Posterior vena cava (tissue), 2 donors: ENCODE measurements at regions of chr15 and their contacts with region 1.

Region 1: GRCh38 chr15:74127260-74127953 is 3.0 kb upstream of the ISLR2 start:
- DNase-seq: peak; percentile 97

Region 2: GRCh38 chr15:74146277-74146800 is 18.9 kb after region 1 on chr15:
- intact Hi-C with region 1: no loop called
- DNase-seq: no peak

Region 3: GRCh38 chr15:74159773-74160172 is 32.4 kb after region 1 on chr15:
- intact Hi-C with region 1: no loop called
- DNase-seq: no peak

Region 4: GRCh38 chr15:74170486-74171226 is 43.2 kb after region 1 on chr15:
- intact Hi-C with region 1: loop called in 1 of 2 experiments (anchors 1 kb)
- DNase-seq: no peak

Region 5: GRCh38 chr15:74302821-74303359 is 175.5 kb after region 1 on chr15:
- intact Hi-C with region 1: loop called (anchors 5 kb)
- DNase-seq: no peak

Region 6: DNA sequence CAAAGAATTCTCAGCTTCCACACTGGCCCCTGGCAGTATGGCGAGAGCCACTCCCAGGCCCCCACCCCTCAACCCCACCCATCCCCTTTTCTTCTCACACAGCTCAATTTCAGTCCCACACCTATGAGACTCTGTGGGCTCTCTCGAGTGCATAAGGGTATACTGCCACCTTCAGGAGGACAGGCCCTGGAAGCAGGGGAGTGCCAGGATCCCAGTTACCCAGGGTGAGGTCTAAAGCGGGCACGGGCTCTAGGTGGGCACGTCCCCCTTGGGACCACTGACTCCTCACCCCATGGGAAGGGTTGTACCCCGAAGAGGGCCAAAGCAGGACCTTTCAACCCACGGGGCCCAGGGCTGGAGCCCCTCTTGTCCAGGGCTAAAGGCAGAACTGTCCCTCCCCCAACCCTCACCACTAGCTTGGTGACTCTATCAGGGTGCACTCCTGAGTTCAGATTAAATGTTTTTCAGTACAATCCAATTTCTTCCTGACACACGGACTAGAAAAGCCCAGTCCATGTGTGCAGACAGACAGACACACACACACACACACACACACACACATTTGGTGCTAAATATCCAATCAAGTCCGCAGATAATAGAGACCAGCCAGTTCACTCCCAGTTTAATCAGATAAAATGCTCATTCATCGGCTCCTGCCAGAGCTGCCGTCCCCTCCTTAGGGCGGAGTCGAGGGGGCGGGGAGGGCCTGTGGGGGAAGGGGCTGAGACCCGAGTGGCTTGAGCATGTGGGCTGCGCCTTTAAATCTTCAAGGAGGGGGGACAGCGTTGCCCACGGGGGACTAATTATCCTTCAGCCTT is 180.6 kb after region 1 on chr15:
- intact Hi-C with region 1: loop called (anchors 5 kb)
- DNase-seq: no peak

Region 7: GRCh38 chr15:74322181-74323076 is 195.0 kb after region 1 on chr15:
- intact Hi-C with region 1: loop called in 1 of 2 experiments (anchors 5 kb)
- DNase-seq: peak; percentile 89